Esophagus muscularis mucosa (tissue), 4 donors: ENCODE measurements at regions of chr13 and their contacts with region 1.

Region 1: GRCh38 chr13:33228648-33229445 is 56.7 kb downstream of the STARD13 start:
- DNase-seq: no peak
- H3K4me3 ChIP-seq: no peak overlapping the region
- H3K27ac ChIP-seq: peak overlapping the region; percentile 57 to 72 (median 64)
- H3K4me1 ChIP-seq: peaks cover 51 to 67% (median 67%) of the 10 kb centered on the region in 4 donors
- H3K27me3 ChIP-seq: no peaks in the 10 kb centered on the region
- CTCF ChIP-seq: peak; percentile 79 to 94 (median 88)
- EP300 ChIP-seq: no peak
- POLR2A ChIP-seq: no peak

Region 2: DNA sequence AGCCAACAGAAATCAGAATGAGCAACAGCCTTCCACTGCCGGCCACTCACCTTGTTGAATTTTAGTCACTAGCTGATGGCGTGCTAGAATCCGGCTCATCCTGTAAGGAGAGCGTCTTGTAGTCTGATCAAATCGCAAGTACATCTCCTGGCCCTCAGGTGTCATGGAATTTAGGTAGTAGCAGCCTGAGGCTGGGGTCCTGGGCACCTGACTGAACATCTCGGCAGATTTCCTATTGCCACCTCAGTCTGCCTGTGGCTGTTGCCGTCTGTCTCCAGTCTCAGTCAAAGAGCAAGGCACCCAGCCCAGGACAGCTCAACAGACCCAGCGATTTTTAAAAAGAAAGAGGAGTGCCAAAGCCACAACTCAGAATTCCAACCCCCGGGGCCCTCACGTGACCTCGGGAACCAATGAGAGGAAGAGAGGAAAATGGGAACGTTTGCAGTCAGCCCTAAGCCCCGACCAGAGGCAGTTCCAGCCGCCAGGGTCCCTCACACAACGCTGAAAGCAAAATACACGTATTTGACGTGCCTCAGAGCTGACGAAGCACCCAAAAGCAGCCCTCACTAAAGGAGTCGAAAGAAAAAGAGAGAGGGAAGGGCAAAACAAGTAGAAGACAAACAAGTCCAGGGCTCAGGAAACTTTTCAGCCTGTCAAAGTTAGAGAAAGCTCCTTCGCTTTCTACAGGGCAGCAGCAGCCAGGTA is 56.7 kb after region 1 on chr13 and contains the start of gene STARD13:
- intact Hi-C with region 1: loop called (anchors 5 kb)
- DNase-seq: peak; percentile 99
- H3K4me3 ChIP-seq: peak within 1 kb of the TSS; percentile 68 to 77 (median 72)
- H3K27ac ChIP-seq: peak within 1 kb of the TSS; percentile 91 to 94 (median 92)
- H3K4me1 ChIP-seq: peaks cover 40 to 74% (median 63%) of the 10 kb centered on the region in 4 donors
- H3K27me3 ChIP-seq: no peaks in the 10 kb centered on the region
- CTCF ChIP-seq: peak in 2 of 3 experiments; percentile 53 to 56
- EP300 ChIP-seq: no peak
- POLR2A ChIP-seq: peak; percentile 83
- total RNA-seq, gene STARD13: 44.9 to 59.2 (median 56.2) TPM

Region 3: DNA sequence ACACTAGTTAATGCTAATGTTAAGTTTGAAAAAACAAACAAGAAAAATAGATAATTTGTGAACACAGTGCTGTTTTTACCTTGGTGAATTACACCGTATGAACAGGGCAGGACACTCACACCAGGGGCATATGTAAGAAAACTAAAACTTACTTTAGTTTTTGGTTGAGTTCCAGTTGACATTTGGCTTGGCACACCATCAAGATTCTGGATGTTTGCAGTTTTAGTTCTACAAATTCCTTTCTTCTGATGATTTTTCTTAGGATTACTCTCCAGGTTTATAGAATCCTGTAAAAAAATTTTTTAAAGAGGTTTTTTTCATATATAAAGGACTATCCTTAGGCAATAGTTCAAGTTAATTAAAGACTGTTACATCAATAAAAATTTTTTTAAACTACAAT is 295.2 kb after region 1 on chr13:
- intact Hi-C with region 1: loop called (anchors 10 kb)
- DNase-seq: no peak
- H3K4me3 ChIP-seq: no peak overlapping the region
- H3K27ac ChIP-seq: peak overlapping the region in 1 of 4 donors; percentile 19
- H3K4me1 ChIP-seq: peaks cover 0 to 31% (median 29%) of the 10 kb centered on the region in 4 donors
- H3K27me3 ChIP-seq: no peaks in the 10 kb centered on the region
- CTCF ChIP-seq: no peak
- EP300 ChIP-seq: no peak
- POLR2A ChIP-seq: no peak